GM23248 (cell line): ENCODE measurements at regions of chr6 and their contacts with region 1.

Region 1: GRCh38 chr6:164911873-164912580 is 397.4 kb downstream of the C6orf118 start:
- DNase-seq: peak; percentile 24
- H3K4me3 ChIP-seq: no peak overlapping the region
- H3K27ac ChIP-seq: no peak overlapping the region
- H3K4me1 ChIP-seq: no peaks in the 10 kb centered on the region
- H3K27me3 ChIP-seq: no peaks in the 10 kb centered on the region

Region 2: GRCh38 chr6:163427498-163428254 is 1484.4 kb before region 1 on chr6:
- in situ Hi-C with region 1: loop called (anchors 25 kb)
- DNase-seq: peak; percentile 80
- H3K4me3 ChIP-seq: peak overlapping the region; percentile 34
- H3K27ac ChIP-seq: peak overlapping the region; percentile 23; the same call in 1 of the 2 replicates
- H3K4me1 ChIP-seq: peaks cover 59% of the 10 kb centered on the region
- H3K27me3 ChIP-seq: no peaks in the 10 kb centered on the region

Region 3: GRCh38 chr6:166202321-166202733 is 1290.3 kb after region 1 on chr6:
- in situ Hi-C with region 1: no loop called
- DNase-seq: no peak
- H3K4me3 ChIP-seq: no peak overlapping the region
- H3K27ac ChIP-seq: no peak overlapping the region
- H3K4me1 ChIP-seq: no peaks in the 10 kb centered on the region
- H3K27me3 ChIP-seq: no peaks in the 10 kb centered on the region